ENCODE measurements at regions of chr12 and their contacts with region 1.

Region 1: DNA sequence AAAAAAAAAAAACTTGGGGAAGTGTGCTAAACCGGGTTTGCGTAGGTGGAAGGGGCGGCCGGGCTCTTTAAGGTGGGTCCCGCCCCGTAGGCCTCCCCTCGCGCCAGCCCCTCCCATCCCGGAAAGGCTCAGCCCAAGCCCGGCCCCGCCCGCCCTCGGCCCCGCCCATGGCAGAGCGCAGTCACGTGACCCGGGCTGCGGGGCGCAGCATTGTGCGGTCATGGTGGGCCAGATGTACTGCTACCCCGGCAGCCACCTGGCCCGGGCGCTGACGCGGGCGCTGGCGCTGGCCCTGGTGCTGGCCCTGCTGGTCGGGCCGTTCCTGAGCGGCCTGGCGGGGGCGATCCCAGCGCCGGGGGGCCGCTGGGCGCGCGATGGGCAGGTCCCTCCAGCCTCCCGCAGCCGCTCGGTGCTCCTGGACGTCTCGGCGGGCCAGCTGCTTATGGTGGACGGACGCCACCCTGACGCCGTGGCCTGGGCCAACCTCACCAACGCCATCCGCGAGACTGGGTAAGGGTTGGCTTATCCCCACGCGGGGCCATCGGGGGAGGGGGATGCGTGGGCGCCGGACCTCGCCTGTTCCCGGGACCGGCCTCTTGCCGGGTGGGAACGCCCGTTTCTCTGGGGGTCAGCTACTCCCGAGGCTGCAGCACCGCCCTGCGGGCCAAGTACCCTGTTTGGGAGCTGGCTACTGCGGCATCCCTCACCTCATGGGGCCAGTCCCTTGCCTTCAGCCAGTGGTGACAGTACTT is at the start of gene PLBD2:
- DNase-seq: peak; percentile 75 to 90
- H3K4me3 ChIP-seq: peak within 1 kb of the TSS; percentile 91
- H3K27ac ChIP-seq: no peak within 1 kb of the TSS
- H3K4me1 ChIP-seq: peaks cover 6% of the 10 kb centered on the region; the same call in 1 of the 2 replicates
- H3K27me3 ChIP-seq: no peaks in the 10 kb centered on the region
- CTCF ChIP-seq: no peak
- total RNA-seq, gene PLBD2: 30.7 and 33.8 TPM in 2 replicates

Region 2: GRCh38 chr12:111841750-111842555 is 1516.6 kb before region 1 on chr12 and contains the start of gene MAPKAPK5:
- CTCF ChIA-PET with region 1: no interaction called
- POLR2A ChIA-PET with region 1: no interaction called
- intact Hi-C with region 1: no loop called
- DNase-seq: peak; percentile 82 to 93
- H3K4me3 ChIP-seq: peak within 1 kb of the TSS; percentile 84
- H3K27ac ChIP-seq: peak within 1 kb of the TSS; percentile 64
- H3K4me1 ChIP-seq: peaks cover 34% of the 10 kb centered on the region
- H3K27me3 ChIP-seq: no peaks in the 10 kb centered on the region
- CTCF ChIP-seq: no peak
- total RNA-seq, gene MAPKAPK5: 45.0 and 64.7 TPM in 2 replicates

Region 3: DNA sequence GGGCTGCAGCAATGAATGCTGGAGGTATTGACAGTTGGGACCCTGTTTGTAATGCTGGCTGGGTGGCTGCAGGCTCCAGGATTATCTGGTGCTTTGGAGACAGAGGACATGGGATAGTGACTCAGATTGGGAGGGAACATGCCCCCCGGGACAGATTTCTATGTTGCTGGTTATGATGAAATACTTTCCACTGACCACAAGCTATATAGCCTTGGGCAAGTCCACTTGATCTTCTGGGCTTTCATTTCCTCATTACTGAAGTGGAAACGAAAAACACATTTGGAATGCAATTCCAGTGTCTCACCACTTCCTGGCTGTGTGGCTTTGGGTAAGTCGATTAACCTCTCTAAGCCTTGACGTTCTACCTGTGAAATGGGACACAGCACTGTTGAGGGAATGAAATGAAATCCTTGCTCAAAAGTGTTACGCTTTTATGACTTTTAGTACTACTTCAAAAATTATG is 143.6 kb before region 1 on chr12:
- CTCF ChIA-PET with region 1: no interaction called
- POLR2A ChIA-PET with region 1: no interaction called
- intact Hi-C with region 1: no loop called
- DNase-seq: peak; percentile 81 to 99
- H3K4me3 ChIP-seq: no peak overlapping the region; the same call in 1 of the 2 replicates
- H3K27ac ChIP-seq: peak overlapping the region; percentile 80
- H3K4me1 ChIP-seq: peaks cover 44% of the 10 kb centered on the region
- H3K27me3 ChIP-seq: no peaks in the 10 kb centered on the region
- CTCF ChIP-seq: peak; percentile 52

Region 4: DNA sequence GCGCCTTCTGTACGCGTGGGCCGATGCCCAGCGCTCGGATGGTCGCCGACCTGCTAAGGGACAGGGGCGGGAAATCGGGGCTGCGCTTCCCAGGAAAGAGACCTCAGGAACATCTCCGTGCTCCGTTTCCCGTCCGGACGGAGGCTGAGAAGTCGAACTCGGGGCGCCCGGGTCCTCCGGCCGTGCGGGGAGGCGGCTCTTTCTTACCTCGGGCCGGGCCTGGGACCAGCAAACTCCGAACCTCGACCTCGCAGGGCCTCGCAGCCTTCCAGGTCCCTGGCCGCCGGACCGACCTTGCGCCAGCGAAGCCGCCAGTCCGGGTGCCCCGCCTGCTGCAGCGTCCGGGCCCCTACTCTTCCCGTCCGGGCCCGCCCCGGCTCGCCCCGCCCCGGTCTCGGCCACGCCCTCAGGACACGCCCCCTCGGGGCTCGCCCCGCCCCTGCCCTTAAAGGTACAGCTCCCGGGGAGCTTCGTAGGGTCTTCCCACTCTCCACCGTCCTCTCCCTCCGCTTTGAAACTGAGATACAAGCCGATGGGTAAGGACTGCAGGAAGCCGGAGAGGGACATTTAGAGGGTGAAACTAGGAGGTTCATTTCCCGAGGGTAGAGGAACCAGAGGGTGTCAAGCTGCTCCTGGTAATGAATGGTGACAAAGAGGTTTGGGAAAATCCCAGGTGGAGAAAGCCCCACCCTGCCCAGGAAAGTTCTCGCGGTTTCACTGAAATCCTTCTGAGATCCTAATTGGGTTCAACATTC is 23.6 kb before region 1 on chr12 and contains the start of gene SLC8B1:
- CTCF ChIA-PET with region 1: no interaction called
- POLR2A ChIA-PET with region 1: no interaction called
- intact Hi-C with region 1: loop called (anchors 2 kb)
- DNase-seq: peak; percentile 61 to 85
- H3K4me3 ChIP-seq: peak within 1 kb of the TSS; percentile 79
- H3K27ac ChIP-seq: peak within 1 kb of the TSS; percentile 30; the same call in 1 of the 2 replicates
- H3K4me1 ChIP-seq: no peaks in the 10 kb centered on the region; the same call in 1 of the 2 replicates
- H3K27me3 ChIP-seq: no peaks in the 10 kb centered on the region
- CTCF ChIP-seq: no peak
- total RNA-seq, gene SLC8B1: 29.0 and 39.1 TPM in 2 replicates

Region 5: GRCh38 chr12:113378291-113378690 is 19.7 kb after region 1 on chr12:
- CTCF ChIA-PET with region 1: no interaction called
- POLR2A ChIA-PET with region 1: interaction called, 16 read pairs
- intact Hi-C with region 1: no loop called
- DNase-seq: no peak
- H3K4me3 ChIP-seq: no peak overlapping the region
- H3K27ac ChIP-seq: no peak overlapping the region
- H3K4me1 ChIP-seq: no peaks in the 10 kb centered on the region
- H3K27me3 ChIP-seq: no peaks in the 10 kb centered on the region
- CTCF ChIP-seq: no peak

Region 6: DNA sequence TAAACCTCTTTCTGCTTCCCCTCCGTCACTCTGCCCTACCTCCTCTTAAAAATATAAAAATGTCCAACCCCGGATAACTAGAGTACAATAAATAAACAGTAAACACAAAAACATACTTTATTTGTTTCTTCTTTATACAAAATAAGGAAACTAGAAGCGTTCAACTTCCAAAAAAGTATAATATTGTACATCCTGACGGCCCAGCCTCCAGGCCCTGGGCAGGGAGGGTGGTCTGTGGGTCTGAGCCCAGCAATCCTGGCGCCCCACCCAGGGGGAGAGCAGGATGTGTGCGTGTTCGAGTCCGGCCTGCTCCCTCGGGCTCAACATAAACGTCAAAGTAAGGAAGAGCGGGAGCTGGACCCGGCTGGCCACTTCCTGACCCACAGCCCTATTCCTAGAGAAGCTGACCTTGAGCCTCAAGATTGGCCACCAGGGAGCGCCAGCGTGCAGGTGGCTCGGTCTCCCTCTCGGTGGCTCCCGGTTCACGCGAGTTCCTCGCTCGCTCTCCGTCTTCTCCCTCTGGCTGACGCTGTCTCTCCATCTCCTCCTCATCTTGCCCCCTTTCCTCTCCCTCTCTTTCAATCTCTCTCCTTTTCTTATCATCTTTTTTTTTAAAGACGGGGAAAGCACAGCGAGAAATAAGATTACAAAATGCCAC is 103.7 kb after region 1 on chr12:
- CTCF ChIA-PET with region 1: no interaction called
- POLR2A ChIA-PET with region 1: no interaction called
- intact Hi-C with region 1: no loop called
- DNase-seq: peak in 1 of 2 experiments; percentile 66
- H3K4me3 ChIP-seq: no peak overlapping the region
- H3K27ac ChIP-seq: no peak overlapping the region
- H3K4me1 ChIP-seq: no peaks in the 10 kb centered on the region
- H3K27me3 ChIP-seq: peaks cover 23% of the 10 kb centered on the region
- CTCF ChIP-seq: peak; percentile 80